ENCODE measurements at regions of chr12 and their contacts with region 1.

Region 1: GRCh38 chr12:14845350-14845750 is 2.0 kb upstream of the ART4 start:
- DNase-seq: no peak
- ATAC-seq: peak; percentile 47

Region 2: DNA sequence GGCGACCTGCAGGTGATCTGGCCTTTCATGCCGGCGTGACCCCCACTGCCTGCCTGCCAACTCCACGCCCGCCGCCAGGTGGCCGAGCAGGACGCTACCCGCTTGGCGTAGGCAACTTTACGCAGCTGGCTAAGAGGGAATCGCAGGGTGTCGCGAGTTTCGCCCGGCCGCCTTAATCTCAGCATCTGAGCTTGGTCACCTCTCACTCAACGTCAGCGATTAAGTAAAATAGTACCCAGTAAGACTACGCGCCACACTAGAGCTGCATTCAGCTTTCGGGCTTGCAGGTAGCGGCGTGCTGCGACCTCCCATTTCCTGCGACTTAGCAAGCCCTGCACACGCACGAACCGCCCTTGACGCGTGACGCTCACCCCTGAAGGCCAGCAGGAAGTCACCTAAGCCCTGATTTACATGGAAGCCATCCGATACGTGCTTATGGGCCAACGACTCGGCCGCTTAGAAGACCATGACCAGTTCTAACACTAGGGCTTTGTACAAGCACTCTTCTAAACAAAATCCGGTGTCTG is 75.3 kb before region 1 on chr12:
- intact Hi-C with region 1: loop called (anchors 2 kb)
- DNase-seq: peak; percentile 92
- ATAC-seq: peak; percentile 61

Region 3: DNA sequence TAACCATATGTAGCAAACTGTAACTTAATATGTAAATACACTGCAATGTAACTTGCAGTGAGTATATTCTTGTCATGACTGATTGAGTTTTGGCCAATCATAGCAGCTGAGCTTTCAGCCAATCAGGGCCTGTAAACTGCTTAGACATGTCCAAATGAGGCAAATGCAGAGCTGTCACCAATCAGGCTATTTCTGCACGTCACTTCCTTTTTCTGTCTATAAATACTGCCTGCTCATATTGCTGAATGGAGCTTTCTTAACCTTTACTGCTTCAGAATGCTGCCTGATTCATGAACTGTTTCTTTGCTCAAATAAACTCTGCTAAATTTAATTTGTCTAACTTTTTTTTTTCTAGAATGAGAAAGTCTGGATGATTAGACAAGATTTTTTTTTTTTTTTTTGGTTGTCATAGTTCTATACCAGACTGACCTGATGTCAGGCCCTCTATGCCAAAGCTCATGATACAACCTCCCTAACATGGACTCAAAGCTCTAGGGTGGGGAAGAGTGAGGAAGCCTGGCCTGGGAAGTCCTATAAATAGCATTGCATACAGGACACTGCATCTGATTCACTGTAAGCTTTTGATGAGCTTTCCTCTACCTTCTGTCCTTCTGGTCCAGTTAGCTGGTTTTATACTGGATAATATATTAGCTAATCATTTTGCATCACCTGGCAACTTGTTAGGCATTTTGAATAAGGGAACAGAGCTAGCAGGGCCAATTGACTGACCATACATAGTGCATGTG is 28.3 kb after region 1 on chr12:
- intact Hi-C with region 1: no loop called
- DNase-seq: no peak
- ATAC-seq: peak; percentile 46

Region 4: GRCh38 chr12:14884458-14884878 is 39.1 kb after region 1 on chr12:
- intact Hi-C with region 1: loop called (anchors 2 kb)
- DNase-seq: peak; percentile 84
- ATAC-seq: peak; percentile 64

Region 5: GRCh38 chr12:14960548-14961465 is 115.5 kb after region 1 on chr12:
- intact Hi-C with region 1: loop called (anchors 10 kb)
- DNase-seq: peak; percentile 74
- ATAC-seq: peak; percentile 75

Region 6: DNA sequence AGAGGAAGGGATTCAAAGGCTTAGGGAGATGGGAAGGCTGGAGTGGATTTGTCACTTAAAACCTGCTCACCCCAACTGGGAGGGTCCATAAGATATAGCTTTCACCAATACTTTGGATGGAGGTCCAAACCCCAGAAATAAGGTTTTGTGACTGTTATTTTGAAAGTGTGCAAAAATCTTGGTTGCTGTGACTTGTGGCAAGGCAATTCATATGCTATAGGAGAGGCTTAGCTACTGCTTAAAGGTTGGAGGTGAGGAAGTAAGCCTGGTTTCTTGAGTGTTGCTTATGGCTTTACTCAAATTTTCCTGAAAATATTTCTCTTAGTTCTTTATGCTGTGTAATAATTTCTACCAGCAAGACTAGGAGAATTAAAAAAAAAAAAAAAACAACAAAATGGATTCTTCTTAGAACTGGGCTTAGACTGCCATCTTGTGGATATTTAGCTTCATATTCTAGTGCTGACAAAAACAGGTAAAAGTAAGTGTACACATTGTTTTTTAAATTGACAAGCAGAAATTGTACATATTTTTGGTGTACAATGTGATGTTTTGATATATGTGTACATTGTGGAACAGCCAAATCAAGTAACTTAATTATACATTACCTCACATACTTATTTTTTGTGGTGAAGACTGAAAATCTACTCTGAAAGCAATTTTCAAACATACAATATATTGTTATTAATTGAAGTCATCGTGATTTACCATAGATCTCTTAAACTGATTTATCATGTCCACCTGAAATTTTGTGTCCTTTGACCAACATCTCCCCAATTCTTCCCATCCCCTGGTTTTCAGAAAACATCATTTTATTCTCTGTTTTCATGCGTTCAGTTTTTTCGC is 150.5 kb after region 1 on chr12:
- intact Hi-C with region 1: loop called (anchors 1 kb)
- DNase-seq: no peak
- ATAC-seq: peak; percentile 42

Region 7: GRCh38 chr12:15092826-15093225 is 247.5 kb after region 1 on chr12:
- intact Hi-C with region 1: no loop called
- DNase-seq: no peak
- ATAC-seq: no peak

Region 8: GRCh38 chr12:15220994-15221885 is 375.9 kb after region 1 on chr12 and contains the start of gene RERG:
- intact Hi-C with region 1: loop called (anchors 5 kb)
- DNase-seq: peak; percentile 88
- ATAC-seq: peak; percentile 99
- total RNA-seq, gene RERG: 4.0 TPM

Region 9: DNA sequence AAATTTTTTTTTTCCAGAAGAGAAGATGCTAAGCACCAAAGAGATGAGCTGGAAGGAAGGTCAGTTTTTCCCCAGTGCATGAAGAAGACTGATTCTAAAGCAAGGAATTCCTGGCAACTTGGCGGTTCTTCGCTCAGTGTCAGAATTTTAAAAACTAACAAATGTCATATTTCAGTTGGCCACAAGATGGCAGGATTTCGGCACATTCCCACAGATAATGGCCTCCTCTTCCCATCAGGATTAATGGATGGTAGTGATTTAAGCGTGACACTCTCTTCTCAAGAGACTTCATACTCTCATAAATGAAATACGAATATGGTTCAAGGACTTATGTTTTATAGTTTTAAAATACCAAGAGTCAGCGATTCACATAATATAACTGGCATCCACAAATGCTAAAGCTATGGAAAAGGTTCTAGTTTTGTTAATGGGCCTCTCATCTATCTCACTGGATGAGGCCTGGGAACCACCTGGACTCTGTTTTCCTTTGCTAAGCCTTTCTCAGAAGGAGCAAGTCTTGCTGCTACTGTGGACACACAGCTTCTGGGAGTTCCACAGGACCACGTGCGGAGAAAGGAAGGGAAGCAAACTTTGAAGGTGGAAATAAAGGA is 430.8 kb after region 1 on chr12:
- intact Hi-C with region 1: loop called (anchors 10 kb)
- DNase-seq: no peak
- ATAC-seq: no peak

Region 10: DNA sequence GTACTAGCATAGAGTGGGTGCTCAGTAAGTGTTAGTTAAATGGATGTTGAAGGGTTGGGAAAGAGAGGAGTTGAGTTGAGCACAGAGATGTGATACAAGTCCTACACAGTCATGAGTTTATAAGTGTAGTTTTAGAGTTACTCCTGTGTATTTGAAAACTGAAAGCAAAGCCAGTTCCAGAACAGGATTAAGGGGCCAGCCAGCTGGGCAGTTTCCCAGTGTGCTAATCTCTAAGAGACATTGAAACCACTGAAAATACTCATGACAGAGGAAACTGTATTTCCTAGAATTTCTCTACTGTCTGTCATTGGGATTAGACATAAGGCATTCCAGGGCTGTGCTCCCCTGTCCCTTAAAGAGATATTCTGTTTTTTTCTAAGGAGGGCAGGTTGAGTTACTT is 1166.8 kb after region 1 on chr12:
- intact Hi-C with region 1: no loop called
- DNase-seq: peak; percentile 78
- ATAC-seq: peak; percentile 90